MCF 10A (cell line): ENCODE measurements at regions of chr21 and their contacts with region 1.

Region 1: DNA sequence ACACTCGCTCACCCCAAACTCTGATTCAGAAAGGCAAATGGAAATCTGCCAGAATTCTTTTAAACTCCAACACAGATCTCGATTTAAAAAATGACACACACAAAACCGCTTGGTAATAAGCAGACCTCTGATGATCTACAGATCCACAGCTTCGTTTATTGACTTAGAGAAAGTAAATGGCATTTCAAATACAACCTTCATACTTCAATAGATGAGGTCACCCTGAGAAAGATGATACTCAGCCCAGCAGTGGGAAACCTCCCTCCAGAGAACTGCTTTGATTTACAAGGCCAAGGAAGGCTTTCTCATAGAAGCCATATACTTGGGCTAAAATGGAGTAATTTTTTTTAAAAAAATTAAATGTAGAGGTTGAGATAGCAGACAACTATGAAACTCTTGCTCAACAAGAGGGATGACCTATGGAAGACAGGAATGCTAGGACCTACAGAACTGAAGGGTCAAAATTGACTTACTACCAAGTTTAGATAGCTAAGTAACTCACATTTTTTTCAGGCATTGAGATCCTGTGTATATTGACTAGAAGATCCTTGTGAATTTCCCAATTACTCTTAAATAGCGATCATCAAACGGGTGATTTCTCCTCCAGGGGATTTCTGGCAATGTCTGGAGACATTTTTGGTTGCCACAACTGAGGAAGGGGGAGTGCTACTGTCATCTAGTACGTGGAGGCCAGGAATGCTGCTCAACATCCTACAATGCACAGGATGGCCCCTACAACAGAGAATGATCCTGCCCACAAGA is 143.9 kb downstream of the CLIC6 start:
- DNase-seq: peak; percentile 57
- H3K4me3 Mint-ChIP-seq: peak overlapping the region; percentile 9
- H3K27ac Mint-ChIP-seq: no peak overlapping the region
- H3K4me1 Mint-ChIP-seq: peaks cover 61% of the 10 kb centered on the region
- H3K27me3 Mint-ChIP-seq: no peaks in the 10 kb centered on the region
- CTCF ChIP-seq: no peak

Region 2: GRCh38 chr21:34737107-34737506 is 75.6 kb before region 1 on chr21:
- CTCF ChIA-PET with region 1: no interaction called
- POLR2A ChIA-PET with region 1: interaction called, 28 read pairs
- intact Hi-C with region 1: no loop called
- DNase-seq: peak; percentile 22
- H3K4me3 Mint-ChIP-seq: no peak overlapping the region
- H3K27ac Mint-ChIP-seq: peak overlapping the region; percentile 24
- H3K4me1 Mint-ChIP-seq: peaks cover 49% of the 10 kb centered on the region
- H3K27me3 Mint-ChIP-seq: no peaks in the 10 kb centered on the region
- CTCF ChIP-seq: no peak

Region 3: DNA sequence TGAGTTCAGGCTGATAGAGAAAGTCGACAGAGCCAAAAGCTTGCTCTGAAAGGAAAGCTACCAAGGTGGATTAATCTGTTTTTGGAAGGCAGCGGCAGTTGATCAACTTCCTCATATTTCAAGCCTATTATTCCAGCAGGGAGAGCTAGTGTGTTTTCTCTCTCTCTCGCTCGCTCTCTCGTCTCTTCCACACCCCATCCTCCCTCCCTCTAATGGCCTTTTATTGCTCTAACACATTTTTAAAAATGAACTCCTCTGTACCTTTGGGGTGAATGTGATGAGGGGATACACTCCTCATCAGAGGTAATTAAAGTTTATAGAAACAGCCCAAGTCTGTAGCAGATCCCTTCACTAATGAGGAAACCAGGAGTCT is 17.5 kb before region 1 on chr21:
- CTCF ChIA-PET with region 1: interaction called, 21 read pairs
- POLR2A ChIA-PET with region 1: interaction called, 200 read pairs
- intact Hi-C with region 1: loop called (anchors 1 kb)
- DNase-seq: peak; percentile 43
- H3K4me3 Mint-ChIP-seq: peak overlapping the region; percentile 49
- H3K27ac Mint-ChIP-seq: peak overlapping the region; percentile 96
- H3K4me1 Mint-ChIP-seq: peaks cover 44% of the 10 kb centered on the region
- H3K27me3 Mint-ChIP-seq: no peaks in the 10 kb centered on the region
- CTCF ChIP-seq: no peak

Region 4: GRCh38 chr21:34801519-34802132 is 11.1 kb before region 1 on chr21:
- CTCF ChIA-PET with region 1: interaction called, 21 read pairs
- POLR2A ChIA-PET with region 1: interaction called, 200 read pairs
- intact Hi-C with region 1: no loop called
- DNase-seq: peak; percentile 52
- H3K4me3 Mint-ChIP-seq: no peak overlapping the region
- H3K27ac Mint-ChIP-seq: peak overlapping the region; percentile 88
- H3K4me1 Mint-ChIP-seq: peaks cover 45% of the 10 kb centered on the region
- H3K27me3 Mint-ChIP-seq: no peaks in the 10 kb centered on the region
- CTCF ChIP-seq: peak; percentile 24

Region 5: DNA sequence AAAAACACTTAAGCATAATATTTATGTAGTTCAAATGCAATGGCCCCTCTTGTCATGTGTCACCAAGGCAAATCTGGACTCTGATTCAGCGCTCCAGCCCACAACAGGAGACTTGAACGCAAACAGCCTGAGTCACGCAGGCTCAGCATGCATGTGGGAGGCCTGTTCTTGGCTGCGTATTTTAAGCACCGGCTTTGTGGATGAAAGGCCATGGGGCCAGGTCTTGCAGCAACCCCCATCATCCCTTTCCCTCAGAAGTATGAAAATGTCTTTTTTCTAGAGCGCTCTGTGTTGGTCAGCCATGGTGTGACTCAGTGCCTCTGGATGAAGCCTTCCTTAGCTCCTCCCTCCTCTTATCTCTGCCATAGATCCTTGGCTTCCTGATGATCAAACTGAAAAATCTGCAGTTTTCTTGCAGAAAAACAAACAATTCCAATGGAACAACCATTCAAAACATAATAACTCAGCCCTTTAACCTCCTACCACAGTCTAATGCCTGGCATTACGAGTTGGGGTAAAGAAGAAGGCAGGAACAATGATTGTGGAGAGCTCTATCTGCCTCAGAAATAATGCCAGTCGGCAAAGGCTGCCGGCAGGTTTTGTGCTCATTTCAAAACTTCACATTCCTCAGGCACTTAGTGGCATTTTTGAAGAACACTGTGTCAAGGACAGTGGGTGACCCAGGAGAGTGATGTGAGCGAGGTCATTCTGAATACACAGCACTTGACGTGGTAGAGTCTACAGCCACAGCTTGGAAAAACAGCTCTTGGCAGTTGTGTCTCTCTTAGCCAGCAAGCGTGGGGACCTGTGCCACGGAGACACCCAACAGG is 23.6 kb after region 1 on chr21:
- CTCF ChIA-PET with region 1: interaction called, 5 read pairs
- POLR2A ChIA-PET with region 1: interaction called, 79 read pairs
- intact Hi-C with region 1: loop called (anchors 2 kb)
- DNase-seq: peak; percentile 98
- H3K4me3 Mint-ChIP-seq: peak overlapping the region; percentile 64
- H3K27ac Mint-ChIP-seq: peak overlapping the region; percentile 94
- H3K4me1 Mint-ChIP-seq: peaks cover 31% of the 10 kb centered on the region
- H3K27me3 Mint-ChIP-seq: no peaks in the 10 kb centered on the region
- CTCF ChIP-seq: no peak

Region 6: DNA sequence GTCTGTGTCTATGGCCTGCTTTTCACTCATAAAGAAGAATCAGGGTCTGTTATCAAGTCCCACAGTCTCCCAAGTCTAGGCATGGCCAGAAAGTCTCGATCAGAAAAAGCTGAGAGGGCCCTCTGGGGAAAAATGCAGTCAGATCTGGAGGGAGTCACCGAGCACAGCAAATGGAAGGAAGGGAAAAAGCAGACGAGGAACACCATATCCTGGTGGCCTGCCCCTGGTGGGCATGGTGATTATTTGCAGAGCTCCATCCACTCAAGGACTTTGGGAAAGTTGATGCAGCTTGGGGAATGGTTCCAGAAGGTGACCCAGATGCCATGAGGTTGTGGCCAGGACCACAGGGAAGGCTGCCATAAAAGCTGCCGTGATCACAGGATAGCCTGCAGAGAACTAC is 45.2 kb after region 1 on chr21:
- CTCF ChIA-PET with region 1: interaction called, 3 read pairs
- POLR2A ChIA-PET with region 1: interaction called, 86 read pairs
- intact Hi-C with region 1: no loop called
- DNase-seq: no peak
- H3K4me3 Mint-ChIP-seq: no peak overlapping the region
- H3K27ac Mint-ChIP-seq: peak overlapping the region; percentile 63
- H3K4me1 Mint-ChIP-seq: peaks cover 35% of the 10 kb centered on the region
- H3K27me3 Mint-ChIP-seq: no peaks in the 10 kb centered on the region
- CTCF ChIP-seq: no peak